ENCODE measurements at regions of chr7 and their contacts with region 1.

Region 1: GRCh38 chr7:108328174-108328651 is 128.0 kb downstream of the NRCAM start:
- DNase-seq: no peak
- ATAC-seq: peak; percentile 94
- H3K4me3 Mint-ChIP-seq: peak overlapping the region; percentile 69
- H3K27ac Mint-ChIP-seq: peak overlapping the region; percentile 87
- H3K4me1 Mint-ChIP-seq: peaks cover 37% of the 10 kb centered on the region
- H3K27me3 Mint-ChIP-seq: no peaks in the 10 kb centered on the region
- CTCF ChIP-seq: no peak

Region 2: DNA sequence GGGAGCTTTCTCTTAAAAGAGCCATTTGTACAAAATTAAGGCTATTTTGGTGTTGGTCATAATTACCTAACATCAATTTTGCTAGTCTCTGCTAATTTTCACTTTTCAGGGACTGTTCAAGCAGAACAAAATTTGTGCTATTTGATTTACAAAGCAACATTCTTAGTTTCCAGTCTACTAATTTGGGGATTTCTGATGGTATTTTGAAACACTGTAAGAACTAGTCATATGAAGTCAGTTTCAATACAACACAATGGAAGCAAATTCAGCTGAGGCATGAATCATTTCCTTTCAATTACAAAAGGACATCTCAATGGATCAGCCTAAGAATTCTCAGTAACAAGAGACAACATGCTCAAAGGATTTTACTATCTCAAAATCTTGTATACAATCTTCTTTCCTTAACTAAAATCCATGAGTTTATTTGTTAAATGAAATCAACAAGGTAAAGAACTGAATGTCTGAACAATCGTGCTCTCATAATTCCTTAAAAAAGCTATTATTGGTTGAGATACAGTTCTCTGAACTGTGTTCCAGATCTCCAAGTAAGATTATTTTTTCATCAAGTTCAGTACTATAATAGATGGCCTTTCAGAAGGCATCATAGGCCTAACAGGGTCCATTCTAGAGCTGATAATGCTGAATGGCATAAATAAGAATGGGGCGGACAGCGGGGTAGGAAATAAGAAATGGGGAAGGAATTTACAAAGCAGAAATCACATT is 16.6 kb before region 1 on chr7:
- CTCF ChIA-PET with region 1: no interaction called
- POLR2A ChIA-PET with region 1: interaction called, 4 read pairs
- intact Hi-C with region 1: loop called (anchors 1 kb)
- DNase-seq: no peak
- ATAC-seq: peak; percentile 42
- H3K4me3 Mint-ChIP-seq: no peak overlapping the region
- H3K27ac Mint-ChIP-seq: peak overlapping the region; percentile 54
- H3K4me1 Mint-ChIP-seq: peaks cover 28% of the 10 kb centered on the region
- H3K27me3 Mint-ChIP-seq: no peaks in the 10 kb centered on the region
- CTCF ChIP-seq: no peak

Region 3: DNA sequence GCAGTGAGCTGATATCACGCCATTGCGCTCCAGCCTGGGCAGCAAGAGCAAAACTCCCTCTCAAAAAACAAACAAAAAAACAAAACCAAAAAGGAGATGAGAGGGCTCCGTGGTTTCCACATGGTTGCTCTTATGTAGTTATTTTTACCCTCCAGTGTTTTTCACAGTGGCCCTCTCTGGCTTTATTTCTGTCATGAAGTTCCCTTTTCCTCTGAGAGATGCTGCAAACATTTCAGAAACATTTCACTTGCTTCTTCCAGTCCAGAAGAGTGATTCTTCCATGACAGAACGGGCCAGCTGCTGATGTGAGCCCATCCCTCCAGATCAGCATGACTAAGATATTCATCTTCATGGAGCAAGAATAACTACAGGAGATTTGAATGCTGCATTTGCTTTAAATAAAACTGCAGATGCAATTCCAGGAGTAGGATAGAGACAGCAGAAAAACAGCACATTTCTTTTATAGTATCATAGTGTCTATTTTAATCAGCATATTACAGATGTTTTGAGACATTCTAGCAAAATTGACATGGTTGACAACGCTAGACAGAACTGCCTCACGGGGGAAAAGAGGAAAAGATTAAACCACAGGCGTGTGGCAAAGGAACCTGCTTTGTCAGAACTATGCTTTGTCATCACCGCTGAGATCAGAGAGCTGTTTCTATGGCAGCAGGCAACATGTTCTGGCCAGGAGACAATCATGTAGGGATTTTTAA is 87.8 kb after region 1 on chr7:
- CTCF ChIA-PET with region 1: no interaction called
- POLR2A ChIA-PET with region 1: no interaction called
- intact Hi-C with region 1: loop called (anchors 5 kb)
- DNase-seq: no peak
- ATAC-seq: peak; percentile 75
- H3K4me3 Mint-ChIP-seq: peak overlapping the region; percentile 72
- H3K27ac Mint-ChIP-seq: peak overlapping the region; percentile 84
- H3K4me1 Mint-ChIP-seq: peaks cover 70% of the 10 kb centered on the region
- H3K27me3 Mint-ChIP-seq: peaks cover 9% of the 10 kb centered on the region
- CTCF ChIP-seq: no peak